OCI-LY7 (cell line): ENCODE measurements at regions of chr10 and their contacts with region 1.

Region 1: DNA sequence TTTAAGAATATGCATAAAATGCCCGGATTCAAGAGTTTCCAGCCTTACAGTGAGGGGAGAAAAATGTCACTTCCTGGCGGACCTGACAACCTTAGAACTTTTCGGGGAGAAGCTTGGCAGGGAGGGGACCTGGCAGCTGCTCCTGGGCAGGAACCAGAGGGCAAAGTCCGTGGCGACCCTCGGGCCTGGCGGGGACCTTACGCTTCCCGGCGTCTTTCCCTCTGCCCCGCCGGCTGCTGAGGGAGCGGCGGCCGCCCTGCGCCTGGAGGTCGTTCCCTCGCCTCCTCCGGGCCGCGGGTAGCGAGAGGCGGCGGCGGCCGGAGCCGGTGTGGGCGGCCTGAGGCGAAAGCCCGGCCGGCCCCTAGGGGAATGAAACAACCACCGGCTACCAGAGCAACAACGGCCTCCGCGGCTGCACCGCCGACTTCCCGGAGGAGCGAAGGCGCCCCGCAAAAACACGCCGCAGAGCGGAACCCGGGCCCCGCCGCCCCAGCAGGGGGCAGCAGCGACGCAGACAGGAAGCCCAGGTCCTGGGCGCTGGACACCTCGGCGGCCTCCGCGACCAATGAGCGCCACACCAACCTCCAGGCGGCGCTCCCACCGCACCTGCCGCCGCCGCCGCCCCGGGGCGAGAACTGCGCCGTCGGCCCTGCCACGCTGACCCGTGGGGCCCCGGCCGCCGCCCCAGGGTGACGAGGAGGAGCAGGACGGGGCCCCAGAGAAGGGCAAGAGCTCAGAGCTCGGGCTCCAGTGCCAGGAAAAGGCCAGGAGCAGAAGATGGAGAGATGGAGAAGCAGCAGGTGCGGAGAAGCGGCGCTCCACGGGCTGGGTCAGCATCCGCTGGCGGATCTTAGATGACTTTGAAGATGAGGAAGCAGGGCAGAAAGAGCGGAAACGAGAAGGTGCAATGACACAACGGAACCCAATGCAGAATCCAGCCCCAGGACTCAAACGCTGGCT is 10.5 kb upstream of the ACSM6 start:
- DNase-seq: peak; percentile 87
- H3K4me3 ChIP-seq: peak overlapping the region; percentile 70
- H3K27ac ChIP-seq: no peak overlapping the region
- H3K4me1 ChIP-seq: peaks cover 4% of the 10 kb centered on the region
- CTCF ChIP-seq: peak; percentile 90

Region 2: DNA sequence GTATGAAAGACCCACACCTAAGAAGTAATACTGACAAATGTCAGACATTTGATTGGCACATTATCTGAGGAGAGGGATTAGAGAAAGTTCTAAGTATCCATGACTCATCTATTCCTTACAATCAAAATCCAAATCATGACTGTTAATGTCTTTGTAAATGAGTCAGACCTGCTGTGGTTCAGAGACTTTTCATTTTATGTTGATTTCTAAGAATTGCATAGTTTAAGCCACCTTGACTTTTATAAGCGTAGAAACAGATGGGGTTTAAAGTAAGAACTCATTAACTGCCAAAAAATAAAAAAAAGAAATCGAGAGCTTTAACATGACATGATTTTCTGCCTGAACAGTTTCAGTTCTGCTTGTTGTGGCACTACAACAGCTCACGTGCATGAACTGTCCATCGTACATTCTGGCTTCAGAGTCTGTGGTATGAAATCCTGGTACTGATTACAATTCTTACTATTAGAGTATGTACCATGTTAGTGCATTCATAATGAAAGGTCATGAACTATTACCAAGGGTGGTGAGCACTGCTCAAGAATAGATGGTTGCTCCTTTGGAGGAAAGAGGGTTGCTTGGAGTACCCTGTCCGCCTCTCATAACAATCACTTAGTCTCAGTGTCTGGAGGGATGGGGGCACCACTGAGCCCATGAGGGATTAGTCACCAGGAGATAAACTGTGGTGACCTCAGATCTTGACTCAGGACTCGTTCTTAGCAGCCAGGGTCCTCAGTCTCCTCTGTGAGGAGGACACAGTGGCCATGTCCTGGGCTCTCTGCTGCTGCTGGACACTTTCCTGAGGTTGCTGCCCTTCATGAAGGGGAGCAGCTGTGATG is 52.7 kb after region 1 on chr10:
- CTCF ChIA-PET with region 1: interaction called, 11 read pairs
- POLR2A ChIA-PET with region 1: interaction called, 3 read pairs
- intact Hi-C with region 1: no loop called
- DNase-seq: peak; percentile 79
- H3K4me3 ChIP-seq: peak overlapping the region; percentile 37
- H3K27ac ChIP-seq: peak overlapping the region; percentile 96
- H3K4me1 ChIP-seq: peaks cover 55% of the 10 kb centered on the region
- CTCF ChIP-seq: peak; percentile 33; the same call in 1 of the 2 replicates

Region 3: GRCh38 chr10:95290461-95291364 is 107.2 kb after region 1 on chr10 and contains the start of gene PDLIM1:
- CTCF ChIA-PET with region 1: interaction called, 3 read pairs
- POLR2A ChIA-PET with region 1: no interaction called
- intact Hi-C with region 1: loop called (anchors 2 kb)
- DNase-seq: peak; percentile 71
- H3K4me3 ChIP-seq: peak within 1 kb of the TSS; percentile 71
- H3K27ac ChIP-seq: no peak within 1 kb of the TSS
- H3K4me1 ChIP-seq: peaks cover 63% of the 10 kb centered on the region
- CTCF ChIP-seq: 0 out of 2 replicates have a peak, but pooled peaks have one; percentile 28
- total RNA-seq, gene PDLIM1: 22.3 and 23.1 TPM in 2 replicates

Region 4: GRCh38 chr10:95363303-95363912 is 179.9 kb after region 1 on chr10:
- CTCF ChIA-PET with region 1: no interaction called
- POLR2A ChIA-PET with region 1: interaction called, 3 read pairs
- intact Hi-C with region 1: loop called (anchors 1 kb)
- DNase-seq: peak; percentile 82
- H3K4me3 ChIP-seq: no peak overlapping the region
- H3K27ac ChIP-seq: no peak overlapping the region
- H3K4me1 ChIP-seq: peaks cover 8% of the 10 kb centered on the region
- CTCF ChIP-seq: peak; percentile 99

Region 5: GRCh38 chr10:95561182-95562075 is 377.9 kb after region 1 on chr10 and contains the start of gene SORBS1:
- CTCF ChIA-PET with region 1: no interaction called
- POLR2A ChIA-PET with region 1: no interaction called
- intact Hi-C with region 1: loop called (anchors 2 kb)
- DNase-seq: peak; percentile 91
- H3K4me3 ChIP-seq: peak within 1 kb of the TSS; percentile 86
- H3K27ac ChIP-seq: no peak within 1 kb of the TSS
- H3K4me1 ChIP-seq: no peaks in the 10 kb centered on the region
- CTCF ChIP-seq: no peak
- total RNA-seq, gene SORBS1: 0.10 and 0.57 TPM in 2 replicates

Region 6: DNA sequence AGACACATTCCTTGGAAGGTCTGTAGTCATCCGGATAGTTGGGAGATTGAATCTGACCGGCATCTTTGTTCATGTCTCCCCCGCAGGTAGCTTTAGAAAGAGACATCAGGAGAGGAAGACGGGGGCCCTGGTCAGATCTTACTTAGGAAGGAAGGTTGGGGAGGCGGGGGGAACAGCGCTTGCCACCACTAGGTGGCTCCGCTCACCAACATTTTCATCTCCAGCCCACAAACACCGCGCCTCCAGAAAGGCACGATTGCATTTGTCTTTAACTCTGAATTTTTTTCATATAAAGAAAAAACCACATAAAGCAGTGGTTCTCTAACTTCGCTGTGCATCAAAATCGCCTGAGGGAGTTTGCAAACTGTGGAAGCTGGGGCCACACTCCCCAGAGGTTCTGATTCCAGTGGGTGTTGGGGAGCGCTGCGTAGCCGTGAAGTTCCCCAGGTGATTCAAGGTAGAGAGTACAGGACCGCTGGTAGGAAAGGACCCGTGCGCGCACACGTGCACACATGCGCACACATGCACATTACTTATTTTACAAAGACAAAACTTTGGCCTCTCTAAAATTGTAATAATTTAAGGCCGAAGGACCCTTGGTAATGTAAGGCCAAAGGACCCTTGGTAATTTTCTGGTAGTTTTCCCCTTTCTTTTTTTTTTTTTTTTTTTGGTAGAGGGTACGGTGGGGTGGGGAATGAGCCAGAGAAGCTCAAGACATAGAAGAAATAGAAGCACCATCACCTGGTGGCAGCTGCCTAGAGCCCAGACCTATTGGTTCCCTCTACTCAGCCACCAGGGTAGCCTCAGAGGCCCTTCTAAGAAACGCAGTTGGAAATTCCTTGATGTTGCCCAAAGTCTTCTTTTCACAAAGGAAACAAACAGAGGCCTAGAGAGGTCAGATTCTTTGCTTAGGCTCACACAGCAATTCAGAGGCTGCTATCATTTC is 1212.7 kb after region 1 on chr10:
- CTCF ChIA-PET with region 1: no interaction called
- POLR2A ChIA-PET with region 1: no interaction called
- intact Hi-C with region 1: no loop called
- DNase-seq: peak; percentile 68
- H3K4me3 ChIP-seq: no peak overlapping the region
- H3K27ac ChIP-seq: no peak overlapping the region
- H3K4me1 ChIP-seq: no peaks in the 10 kb centered on the region
- CTCF ChIP-seq: peak; percentile 94